ENCODE measurements at regions of chr6 and their contacts with region 1.

Region 1: DNA sequence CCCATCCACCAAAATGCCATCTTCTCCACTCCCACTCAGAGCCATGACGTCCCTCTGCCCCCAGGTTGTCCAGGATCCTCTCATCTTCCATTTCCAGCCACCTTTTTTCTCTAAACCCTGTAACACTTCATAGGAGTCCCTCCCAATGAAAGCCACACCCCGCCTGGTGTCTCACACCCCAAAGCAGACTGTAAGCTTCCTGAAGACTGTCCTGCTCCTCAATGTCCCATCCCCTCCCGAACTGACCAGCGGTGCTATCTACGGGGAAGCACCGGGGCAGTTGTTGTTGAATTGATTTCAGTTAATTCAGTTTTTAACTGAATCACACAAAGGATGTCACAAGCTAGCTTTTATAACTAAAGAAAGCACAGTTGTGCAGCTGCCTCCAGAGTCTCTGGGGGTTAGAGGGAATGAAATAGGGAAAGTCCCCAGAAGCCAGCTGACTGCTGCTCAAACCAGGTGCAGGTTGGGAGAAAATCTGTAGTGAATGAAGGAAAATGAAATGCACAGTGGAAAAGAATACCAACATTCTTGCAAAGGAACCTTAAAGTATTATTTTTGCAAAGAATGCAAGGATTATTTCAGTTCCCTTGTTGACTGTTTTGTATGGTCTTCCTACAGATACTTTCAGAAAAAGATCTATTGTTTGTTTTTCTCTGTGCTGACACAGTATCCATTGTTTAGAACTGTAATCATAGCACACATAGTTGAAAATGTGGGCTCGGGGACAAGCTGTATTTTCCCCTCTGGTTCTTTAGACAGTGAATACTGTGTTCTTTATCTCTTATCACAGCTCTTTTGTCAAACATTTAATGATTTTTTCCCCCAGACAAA is 222.6 kb upstream of the QKI start:
- DNase-seq: no peak
- H3K4me3 ChIP-seq: peak overlapping the region in 2 of 59 donors; percentile 8 to 26
- H3K27ac ChIP-seq: peak overlapping the region; percentile 72 to 100 (median 97)
- H3K27me3 ChIP-seq: no peaks in the 10 kb centered on the region
- CTCF ChIP-seq: no peak

Region 2: GRCh38 chr6:163243083-163243482 is 51.2 kb after region 1 on chr6:
- intact Hi-C with region 1: loop called (anchors 1 kb)
- DNase-seq: peak; percentile 17 to 96 (median 90)
- H3K4me3 ChIP-seq: no peak overlapping the region
- H3K27ac ChIP-seq: peak overlapping the region; percentile 71 to 100 (median 98)
- H3K27me3 ChIP-seq: no peaks in the 10 kb centered on the region
- CTCF ChIP-seq: peak in 34 of 56 donors; percentile 12 to 53 (median 30)

Region 3: GRCh38 chr6:163347021-163347446 is 155.1 kb after region 1 on chr6:
- intact Hi-C with region 1: loop called in 1 of 2 experiments (anchors 2 kb)
- DNase-seq: no peak
- H3K4me3 ChIP-seq: peak overlapping the region in 13 of 59 donors; percentile 11 to 51 (median 37)
- H3K27ac ChIP-seq: peak overlapping the region; percentile 89 to 100 (median 97)
- H3K27me3 ChIP-seq: no peaks in the 10 kb centered on the region
- CTCF ChIP-seq: no peak

Region 4: DNA sequence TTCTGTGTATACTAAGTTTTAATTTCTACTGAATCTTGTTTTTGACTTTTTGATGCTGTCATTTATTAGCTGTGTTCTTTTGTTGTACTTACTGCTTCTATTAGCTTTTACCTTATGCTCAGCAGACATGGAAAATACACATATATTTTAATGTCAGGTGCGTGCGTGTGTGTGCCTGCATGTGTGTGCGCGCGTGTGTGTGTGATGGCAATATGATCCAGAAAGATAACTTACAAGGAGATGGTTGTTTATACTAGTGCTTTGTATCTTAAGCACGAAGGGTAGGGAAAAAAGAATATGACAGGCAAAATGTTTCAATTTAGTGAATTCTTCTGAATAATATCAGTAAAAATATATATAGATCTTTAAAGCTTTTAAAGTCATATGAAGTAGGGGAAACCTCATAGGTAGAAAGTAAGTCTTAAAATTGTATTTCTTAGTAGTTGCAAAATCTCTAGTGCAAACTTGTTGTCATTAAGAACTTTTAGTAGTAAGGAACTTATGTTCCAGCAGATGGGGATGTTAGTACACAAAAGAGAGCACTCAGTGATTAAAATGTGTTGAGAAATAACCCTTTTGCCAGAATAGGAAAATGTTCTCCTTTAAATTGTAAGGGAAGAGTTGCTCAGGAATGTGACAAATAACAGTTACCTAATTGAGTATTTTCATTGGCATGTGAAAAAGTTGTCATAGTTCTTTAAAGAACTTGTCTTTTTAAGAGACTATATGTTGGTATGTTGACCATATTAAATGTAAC is 235.8 kb after region 1 on chr6:
- intact Hi-C with region 1: no loop called
- DNase-seq: no peak
- H3K4me3 ChIP-seq: peak overlapping the region in 56 of 59 donors; percentile 1 to 97 (median 58)
- H3K27ac ChIP-seq: peak overlapping the region in 49 of 59 donors; percentile 4 to 100 (median 59)
- H3K27me3 ChIP-seq: no peaks in the 10 kb centered on the region
- CTCF ChIP-seq: peak in 54 of 56 donors; percentile 8 to 68 (median 42)

Region 5: GRCh38 chr6:163637524-163637923 is 445.6 kb after region 1 on chr6:
- intact Hi-C with region 1: no loop called
- DNase-seq: no peak
- H3K4me3 ChIP-seq: no peak overlapping the region
- H3K27ac ChIP-seq: no peak overlapping the region
- H3K27me3 ChIP-seq: peaks cover 0 to 4% (median 0%) of the 10 kb centered on the region in 45 donors
- CTCF ChIP-seq: no peak